ENCODE measurements at regions of chr15 and their contacts with region 1.

Region 1: GRCh38 chr15:31440754-31441311 is 114.2 kb downstream of the KLF13 start:
- DNase-seq: peak; percentile 60
- H3K4me3 Mint-ChIP-seq: peak overlapping the region; percentile 77
- H3K27ac Mint-ChIP-seq: peak overlapping the region; percentile 81
- H3K4me1 Mint-ChIP-seq: peaks cover 69% of the 10 kb centered on the region
- H3K27me3 Mint-ChIP-seq: no peaks in the 10 kb centered on the region

Region 2: GRCh38 chr15:31483053-31483985 is 42.5 kb after region 1 on chr15:
- CTCF ChIA-PET with region 1: interaction called, 117 read pairs
- POLR2A ChIA-PET with region 1: interaction called, 48 read pairs
- DNase-seq: peak; percentile 64
- H3K4me3 Mint-ChIP-seq: peak overlapping the region; percentile 86
- H3K27ac Mint-ChIP-seq: peak overlapping the region; percentile 86
- H3K4me1 Mint-ChIP-seq: peaks cover 63% of the 10 kb centered on the region
- H3K27me3 Mint-ChIP-seq: peaks cover 7% of the 10 kb centered on the region